ACHN (cell line): ENCODE measurements at regions of chr12 and their contacts with region 1.

Region 1: DNA sequence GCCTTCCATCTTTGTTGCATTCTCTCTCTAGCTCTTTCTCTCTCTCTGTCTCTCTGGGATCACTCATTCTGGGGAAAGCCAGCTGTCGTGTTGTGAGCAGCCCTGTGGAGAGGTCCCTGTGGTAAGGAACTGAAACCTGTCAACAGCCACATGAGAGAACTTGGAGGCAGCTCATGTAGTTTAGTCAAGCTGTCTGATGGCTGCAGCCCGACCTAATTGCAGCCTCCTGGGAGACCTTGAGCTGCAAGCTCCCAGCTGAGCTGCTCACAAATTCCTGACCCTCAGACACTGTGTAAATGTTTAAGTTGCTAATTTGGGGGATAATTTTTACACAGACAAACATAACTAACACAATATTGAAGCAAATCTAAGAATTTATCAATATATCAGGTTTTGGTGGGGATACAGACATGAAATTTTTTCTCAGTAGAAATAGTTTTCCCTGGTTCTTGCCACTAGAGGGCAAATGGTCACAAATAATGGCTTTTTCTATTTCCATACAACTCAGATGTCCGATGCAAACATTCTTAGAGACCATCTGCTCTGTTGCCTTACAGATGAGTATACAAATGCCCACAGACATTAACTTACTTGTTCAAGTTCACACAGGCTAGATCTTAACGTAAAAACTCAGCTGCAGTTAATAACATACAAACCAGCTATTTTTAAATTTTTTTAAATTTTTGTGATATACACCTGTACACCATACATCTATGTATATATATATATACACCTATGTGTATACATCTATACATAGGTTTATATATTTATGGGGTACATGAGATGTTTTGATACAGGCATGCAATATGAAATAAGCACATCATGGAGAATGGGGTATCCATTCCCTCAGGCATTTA is 15.5 kb upstream of the KRR1 start:
- DNase-seq: peak; percentile 81

Region 2: DNA sequence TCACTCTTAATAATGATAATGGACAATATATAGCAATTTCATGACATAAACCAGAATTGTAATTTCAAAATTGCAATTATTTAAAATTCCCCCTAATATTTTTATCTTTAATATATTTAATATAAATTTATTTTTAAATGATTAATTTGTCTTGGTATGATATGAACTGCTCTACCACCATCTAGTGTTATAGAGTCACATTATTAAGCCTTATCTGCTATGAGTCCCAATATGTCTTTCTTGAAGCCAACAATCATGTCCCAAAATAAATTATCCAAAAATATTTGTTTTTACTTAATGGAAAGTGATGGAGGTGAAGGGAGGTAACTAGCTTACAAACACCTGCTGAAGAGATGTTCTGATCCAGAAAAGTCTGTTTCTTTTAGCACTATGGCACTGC is 468.7 kb before region 1 on chr12:
- in situ Hi-C with region 1: no loop called
- DNase-seq: peak; percentile 21

Region 3: DNA sequence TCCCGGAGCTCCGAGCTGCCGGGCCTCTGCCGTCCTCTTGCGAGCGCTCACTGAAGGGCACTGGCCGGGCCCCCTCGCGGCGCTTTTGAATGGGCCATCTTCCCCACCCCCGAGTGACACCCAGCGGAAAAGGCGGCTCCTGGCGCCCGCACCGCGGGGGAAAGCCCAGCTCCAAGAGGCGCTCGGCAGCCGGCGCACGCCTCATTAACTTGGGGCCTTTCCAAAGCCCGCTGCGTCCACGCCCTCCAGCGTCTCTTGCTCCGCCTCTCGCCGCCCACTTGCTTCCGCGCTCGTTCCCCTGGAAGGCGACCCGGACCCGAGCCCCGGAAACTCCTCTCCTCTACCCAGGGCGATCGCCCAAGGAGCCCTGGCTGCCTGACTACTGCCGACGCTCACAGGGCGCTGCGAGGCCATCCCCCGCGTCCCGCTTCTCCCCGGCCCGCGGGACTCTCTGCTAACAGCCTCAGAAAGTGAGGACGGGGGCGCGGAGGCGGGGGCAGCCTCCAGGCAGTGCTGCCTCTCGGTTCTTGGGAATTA is 504.7 kb after region 1 on chr12 and contains the start of gene PHLDA1:
- in situ Hi-C with region 1: loop called (anchors 25 kb)
- DNase-seq: peak; percentile 99